HepG2 (cell line): ENCODE measurements at regions of chr17 and their contacts with region 1.

Region 1: GRCh38 chr17:57463103-57463851 is 207.0 kb downstream of the MSI2 start:
- DNase-seq: peak; percentile 30
- ATAC-seq: no peak
- H3K4me3 ChIP-seq: no peak overlapping the region
- H3K27ac ChIP-seq: no peak overlapping the region
- H3K4me1 ChIP-seq: peaks cover 74% of the 10 kb centered on the region
- H3K27me3 ChIP-seq: no peaks in the 10 kb centered on the region
- CTCF ChIP-seq: no peak
- EP300 ChIP-seq: no peak
- POLR2A ChIP-seq: no peak
- RAD21 ChIP-seq: no peak

Region 2: DNA sequence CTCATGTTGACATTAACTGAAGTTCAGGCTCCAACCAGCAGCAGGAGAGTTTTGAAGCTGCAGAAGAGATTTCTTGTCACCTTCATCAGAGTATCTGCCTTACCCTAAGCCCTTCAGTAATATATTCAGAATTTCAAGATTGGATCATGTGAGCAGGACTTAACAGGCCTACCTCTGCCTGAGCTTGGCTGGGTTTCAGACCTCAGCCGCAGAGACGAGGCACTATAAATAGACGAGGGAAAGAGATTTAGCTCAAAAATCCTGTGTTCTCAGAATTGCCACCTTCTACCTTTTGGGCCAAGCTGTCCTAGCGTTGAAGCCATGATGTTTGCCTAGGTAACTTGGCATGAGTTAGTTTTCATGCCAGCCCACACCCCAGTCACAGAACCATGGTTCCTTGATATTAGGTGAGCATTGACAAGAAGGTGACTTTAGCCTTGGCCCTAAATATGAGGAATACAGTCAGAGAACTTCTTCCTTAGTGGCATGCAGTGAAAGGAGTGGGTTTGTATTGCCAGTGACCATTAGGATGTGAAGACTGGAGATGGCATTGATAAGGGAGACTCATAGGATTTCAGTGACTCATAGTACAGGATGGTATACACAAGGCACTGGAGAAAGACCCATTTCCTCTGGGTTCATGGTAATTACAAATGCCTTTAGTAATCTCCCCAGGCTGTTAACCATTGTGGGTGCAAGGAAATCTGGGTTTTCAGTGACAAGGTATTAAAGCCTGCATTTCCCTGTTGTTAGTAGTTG is 17.3 kb after region 1 on chr17:
- CTCF ChIA-PET with region 1: no interaction called
- POLR2A ChIA-PET with region 1: no interaction called
- in situ Hi-C with region 1: no loop called
- intact Hi-C with region 1: no loop called
- DNase-seq: peak; percentile 31
- ATAC-seq: no peak
- H3K4me3 ChIP-seq: no peak overlapping the region
- H3K27ac ChIP-seq: no peak overlapping the region
- H3K4me1 ChIP-seq: peaks cover 9% of the 10 kb centered on the region
- H3K27me3 ChIP-seq: no peaks in the 10 kb centered on the region
- CTCF ChIP-seq: no peak
- EP300 ChIP-seq: no peak
- POLR2A ChIP-seq: no peak
- RAD21 ChIP-seq: no peak

Region 3: DNA sequence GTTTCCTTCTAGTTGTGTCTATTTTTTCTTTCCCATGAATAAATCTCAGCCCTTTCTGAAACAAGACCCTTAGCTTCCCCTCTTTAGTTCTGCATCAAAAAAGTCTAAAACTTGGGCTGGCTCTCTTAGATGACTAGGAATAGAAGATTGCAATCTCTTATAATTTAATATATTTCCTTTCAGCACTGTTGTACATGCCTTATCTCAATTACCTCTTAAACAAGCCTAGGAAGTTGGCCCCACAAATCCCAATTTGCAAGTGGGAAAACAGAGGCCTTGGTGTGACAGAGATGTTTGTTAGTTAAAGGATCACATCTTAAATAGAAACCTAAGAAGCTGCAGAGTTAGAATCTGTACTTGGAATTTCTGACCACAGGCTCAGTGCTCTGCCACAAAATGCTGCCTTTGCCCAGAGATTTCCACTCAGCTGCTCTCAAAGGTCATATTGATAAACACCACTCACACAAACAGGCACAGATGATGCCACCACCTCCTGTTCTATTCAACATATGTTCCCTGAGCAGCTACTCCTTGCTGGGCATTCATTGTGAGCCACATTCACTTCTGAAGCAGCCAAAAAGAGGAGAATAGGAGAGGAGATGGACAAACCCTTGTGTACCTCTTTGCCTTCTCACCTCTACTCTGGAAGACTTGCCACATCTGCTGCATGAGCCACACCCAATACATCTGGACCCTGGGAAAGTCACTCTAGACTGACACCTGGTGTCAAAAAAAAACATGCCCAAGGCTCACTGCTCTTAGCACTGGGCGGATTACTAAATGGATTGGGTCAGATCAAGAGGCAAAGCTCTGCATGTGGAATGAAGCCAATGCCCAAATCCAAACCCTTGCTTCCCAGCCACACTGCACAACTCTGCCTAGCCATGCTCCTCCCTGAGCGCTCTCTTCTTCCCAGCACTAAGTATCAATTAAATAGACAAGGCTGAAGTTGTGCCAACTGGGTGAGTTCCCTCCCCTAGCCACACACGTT is 276.4 kb after region 1 on chr17:
- CTCF ChIA-PET with region 1: no interaction called
- POLR2A ChIA-PET with region 1: no interaction called
- in situ Hi-C with region 1: no loop called
- intact Hi-C with region 1: loop called (anchors 5 kb)
- DNase-seq: peak; percentile 53
- ATAC-seq: peak; percentile 91
- H3K4me3 ChIP-seq: no peak overlapping the region
- H3K27ac ChIP-seq: no peak overlapping the region
- H3K4me1 ChIP-seq: no peaks in the 10 kb centered on the region
- H3K27me3 ChIP-seq: peaks cover 0 to 27% of the 10 kb centered on the region in 2 experiments; a peak in 3 of 5 replicates
- CTCF ChIP-seq: peak; percentile 82
- EP300 ChIP-seq: no peak
- POLR2A ChIP-seq: no peak
- RAD21 ChIP-seq: 0 out of 2 replicates have a peak, but pooled peaks have one; percentile 36